ENCODE measurements at regions of chr19 and their contacts with region 1.

Region 1: DNA sequence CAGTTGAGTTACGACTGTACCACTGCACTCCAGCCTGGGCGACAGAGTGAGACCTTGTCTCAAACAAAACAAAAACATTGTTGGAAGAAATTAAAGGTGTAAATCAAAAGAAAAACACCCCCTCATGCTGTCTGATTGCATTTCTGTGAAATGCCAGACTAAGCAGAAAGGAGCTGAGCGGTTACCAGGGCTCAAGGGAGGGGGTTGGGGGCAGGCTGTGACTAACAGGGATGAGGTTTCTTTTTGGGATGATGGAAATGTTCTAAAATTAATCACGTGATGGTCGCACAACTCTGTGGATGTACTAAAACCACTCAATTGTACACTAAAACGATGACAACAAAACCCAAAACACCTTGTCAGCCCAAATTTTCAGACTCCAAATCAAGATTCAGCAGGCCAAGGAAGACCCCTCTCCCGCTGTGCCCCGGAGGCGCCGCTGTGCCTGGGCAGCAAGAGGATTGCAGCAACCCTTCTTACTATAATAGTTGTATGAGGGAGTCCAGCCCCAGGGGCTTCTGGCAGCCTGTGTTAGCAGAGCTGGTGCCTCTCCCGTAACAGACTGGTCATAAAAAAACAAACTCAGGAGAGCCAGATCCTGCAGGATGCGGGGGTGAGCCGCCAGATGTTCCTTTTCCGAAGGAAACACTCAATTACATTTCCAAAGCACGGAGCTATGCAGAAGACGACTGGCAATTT is 20.9 kb downstream of the CAPS start:
- DNase-seq: peak; percentile 84
- H3K4me3 ChIP-seq: peak overlapping the region; percentile 39
- H3K27ac ChIP-seq: peak overlapping the region; percentile 98
- H3K27me3 ChIP-seq: no peaks in the 10 kb centered on the region
- CTCF ChIP-seq: no peak

Region 2: GRCh38 chr19:5904352-5905113 is 30.4 kb before region 1 on chr19 and contains the start of gene VMAC:
- CTCF ChIA-PET with region 1: no interaction called
- POLR2A ChIA-PET with region 1: interaction called, 20 read pairs
- DNase-seq: peak; percentile 100
- H3K4me3 ChIP-seq: peak within 1 kb of the TSS; percentile 86
- H3K27ac ChIP-seq: peak within 1 kb of the TSS; percentile 96
- H3K27me3 ChIP-seq: no peaks in the 10 kb centered on the region
- CTCF ChIP-seq: no peak
- polyA plus RNA-seq, gene VMAC: 2.5 and 2.6 TPM in 2 replicates

Region 3: GRCh38 chr19:5947435-5947834 is 12.5 kb after region 1 on chr19:
- CTCF ChIA-PET with region 1: no interaction called
- POLR2A ChIA-PET with region 1: interaction called, 11 read pairs
- DNase-seq: no peak
- H3K4me3 ChIP-seq: no peak overlapping the region
- H3K27ac ChIP-seq: peak overlapping the region; percentile 21
- H3K27me3 ChIP-seq: no peaks in the 10 kb centered on the region
- CTCF ChIP-seq: no peak

Region 4: DNA sequence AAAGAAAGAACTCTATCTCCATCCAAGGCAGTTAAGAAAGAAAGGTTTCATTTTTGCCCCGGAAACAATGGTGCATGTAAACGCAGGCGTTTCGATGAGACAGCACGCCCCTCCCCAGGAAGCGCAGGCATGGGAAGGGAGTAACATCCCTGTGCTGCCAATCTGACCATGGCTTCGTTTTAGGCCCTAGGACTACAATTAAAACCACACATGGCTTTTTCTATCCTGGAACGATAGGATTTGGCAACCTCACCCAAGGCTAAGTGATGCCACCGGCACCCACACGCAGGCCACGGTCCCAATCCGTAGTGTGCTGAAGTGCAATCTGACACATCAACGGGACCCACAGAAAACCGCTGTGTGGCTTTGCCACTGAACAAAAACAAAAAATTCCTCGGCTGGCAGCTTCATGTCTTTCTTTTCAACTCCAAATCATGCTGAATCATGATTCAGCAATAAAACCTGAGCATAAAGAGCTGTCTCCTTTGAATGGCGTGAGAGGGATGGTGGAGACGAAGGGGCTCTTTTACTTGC is 18.8 kb after region 1 on chr19:
- CTCF ChIA-PET with region 1: no interaction called
- POLR2A ChIA-PET with region 1: interaction called, 11 read pairs
- DNase-seq: no peak
- H3K4me3 ChIP-seq: no peak overlapping the region
- H3K27ac ChIP-seq: peak overlapping the region; percentile 89
- H3K27me3 ChIP-seq: no peaks in the 10 kb centered on the region
- CTCF ChIP-seq: no peak

Region 5: DNA sequence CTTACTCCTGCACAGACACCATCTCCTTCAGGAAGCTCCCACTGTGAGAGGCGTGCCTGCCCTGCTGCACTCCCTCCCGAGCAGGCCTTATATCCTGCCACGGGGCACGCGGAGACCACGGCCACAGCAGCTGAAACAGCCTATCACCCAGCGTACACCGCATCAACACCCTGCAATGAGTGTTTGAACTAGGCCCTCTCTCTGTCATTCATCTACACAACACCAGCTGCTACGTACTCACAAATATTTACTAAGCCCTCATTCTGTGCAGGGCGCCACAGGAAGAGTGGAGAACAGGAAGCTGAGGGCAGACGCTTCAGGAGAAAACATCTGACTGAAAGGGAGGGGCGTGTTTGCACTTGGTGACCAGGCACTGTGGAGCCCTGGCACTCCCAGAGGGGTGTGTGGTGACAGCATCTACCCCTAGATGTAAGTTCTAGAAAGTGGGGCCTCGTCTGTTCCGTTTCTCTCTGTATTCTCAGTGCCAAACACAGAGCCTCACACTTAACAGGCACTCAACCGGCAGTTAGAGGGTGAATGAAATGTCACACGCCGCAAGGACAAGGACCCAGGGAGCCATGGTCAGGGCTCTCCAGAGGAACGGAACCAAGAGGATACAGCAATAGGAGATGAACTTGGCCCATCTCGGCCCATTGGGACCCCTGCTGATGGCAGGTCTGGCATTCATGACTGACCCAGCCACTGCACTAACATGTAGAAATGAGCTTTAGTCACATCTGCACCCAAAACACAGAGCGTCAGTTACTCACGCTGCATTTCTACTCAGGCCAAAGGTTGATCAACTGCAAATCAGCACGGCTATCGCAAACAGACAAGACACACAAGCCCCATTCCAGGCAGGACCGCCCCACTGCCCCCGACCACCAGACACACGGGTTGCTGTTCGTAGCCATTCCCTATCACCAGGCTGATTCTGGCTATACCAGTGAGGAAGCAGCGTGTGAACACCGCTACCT is 27.3 kb after region 1 on chr19:
- CTCF ChIA-PET with region 1: interaction called, 26 read pairs
- POLR2A ChIA-PET with region 1: interaction called, 22 read pairs
- DNase-seq: no peak
- H3K4me3 ChIP-seq: no peak overlapping the region
- H3K27ac ChIP-seq: peak overlapping the region; percentile 82
- H3K27me3 ChIP-seq: no peaks in the 10 kb centered on the region
- CTCF ChIP-seq: no peak